H1 (cell line): ENCODE measurements at regions of chr9 and their contacts with region 1.

Region 1: GRCh38 chr9:121322037-121322775 is 47.8 kb downstream of the STOM start:
- DNase-seq: no peak
- H3K4me3 ChIP-seq: no peak overlapping the region
- H3K27ac ChIP-seq: no peak overlapping the region
- H3K4me1 ChIP-seq: no peaks in the 10 kb centered on the region
- H3K27me3 ChIP-seq: no peaks in the 10 kb centered on the region
- CTCF ChIP-seq: no peak
- EP300 ChIP-seq: no peak
- POLR2A ChIP-seq: no peak
- RAD21 ChIP-seq: no peak

Region 2: GRCh38 chr9:121222524-121223171 is 99.6 kb before region 1 on chr9:
- CTCF ChIA-PET with region 1: interaction called, 11 read pairs
- POLR2A ChIA-PET with region 1: no interaction called
- DNase-seq: no peak
- H3K4me3 ChIP-seq: no peak overlapping the region
- H3K27ac ChIP-seq: no peak overlapping the region
- H3K4me1 ChIP-seq: peaks cover 12 to 24% (median 19%) of the 10 kb centered on the region in 4 experiments
- H3K27me3 ChIP-seq: peaks cover 0 to 2% (median 0%) of the 10 kb centered on the region in 4 experiments; a peak in 2 of 7 replicates
- CTCF ChIP-seq: peak in 1 of 3 experiments; percentile 58; a peak in 1 of 4 replicates
- EP300 ChIP-seq: no peak
- POLR2A ChIP-seq: no peak
- RAD21 ChIP-seq: peak; percentile 30 to 34; a peak in 3 of 4 replicates

Region 3: GRCh38 chr9:121286973-121287741 is 35.0 kb before region 1 on chr9:
- CTCF ChIA-PET with region 1: interaction called, 18 read pairs
- POLR2A ChIA-PET with region 1: no interaction called
- DNase-seq: peak; percentile 77 to 88
- H3K4me3 ChIP-seq: peak overlapping the region in 1 of 4 experiments; percentile 45; a peak in 4 of 8 replicates
- H3K27ac ChIP-seq: no peak overlapping the region
- H3K4me1 ChIP-seq: peaks cover 24 to 36% (median 28%) of the 10 kb centered on the region in 4 experiments
- H3K27me3 ChIP-seq: peaks cover 9 to 54% (median 47%) of the 10 kb centered on the region in 4 experiments
- CTCF ChIP-seq: peak; percentile 13 to 42 (median 28)
- EP300 ChIP-seq: peak in 1 of 2 experiments; percentile 66; a peak in 1 of 3 replicates
- POLR2A ChIP-seq: no peak
- RAD21 ChIP-seq: peak; percentile 30 to 44; a peak in 3 of 4 replicates

Region 4: DNA sequence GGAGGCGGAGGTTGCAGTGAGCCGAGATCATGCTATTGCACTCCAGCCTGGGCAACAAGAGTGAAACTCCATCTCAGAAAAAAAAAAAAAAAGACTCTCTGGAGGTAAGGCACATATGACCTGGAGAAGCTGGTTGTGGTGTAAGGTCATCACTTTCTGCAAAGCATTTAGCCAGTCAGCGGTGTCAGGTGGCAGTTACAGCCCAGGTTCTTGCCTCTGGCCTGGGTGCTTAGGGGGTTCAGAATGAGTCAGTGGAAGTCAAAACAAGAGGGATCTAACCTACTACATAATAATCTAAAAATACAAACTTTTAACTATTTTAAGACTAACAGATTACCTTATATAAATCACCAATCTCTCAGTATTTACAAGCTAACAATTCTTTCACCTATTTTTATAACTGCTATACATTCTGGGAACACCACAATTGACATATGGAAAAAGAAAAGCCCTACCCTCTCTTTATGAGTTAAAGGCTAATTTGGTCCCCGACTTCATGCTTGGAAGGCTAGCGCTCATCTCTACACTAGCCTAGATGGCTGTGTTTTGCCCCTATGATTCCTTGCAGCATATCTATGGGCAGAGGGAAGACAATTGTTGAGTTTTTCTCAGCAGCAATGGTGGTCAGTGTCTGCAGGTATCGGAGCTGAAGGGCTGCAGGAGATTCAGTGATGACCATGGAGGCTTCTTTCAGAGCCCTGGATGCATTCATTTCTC is 18.6 kb after region 1 on chr9:
- CTCF ChIA-PET with region 1: interaction called, 59 read pairs
- POLR2A ChIA-PET with region 1: no interaction called
- DNase-seq: no peak
- H3K4me3 ChIP-seq: no peak overlapping the region
- H3K27ac ChIP-seq: no peak overlapping the region
- H3K4me1 ChIP-seq: no peaks in the 10 kb centered on the region
- H3K27me3 ChIP-seq: no peaks in the 10 kb centered on the region
- CTCF ChIP-seq: no peak
- EP300 ChIP-seq: no peak
- POLR2A ChIP-seq: no peak
- RAD21 ChIP-seq: no peak

Region 5: DNA sequence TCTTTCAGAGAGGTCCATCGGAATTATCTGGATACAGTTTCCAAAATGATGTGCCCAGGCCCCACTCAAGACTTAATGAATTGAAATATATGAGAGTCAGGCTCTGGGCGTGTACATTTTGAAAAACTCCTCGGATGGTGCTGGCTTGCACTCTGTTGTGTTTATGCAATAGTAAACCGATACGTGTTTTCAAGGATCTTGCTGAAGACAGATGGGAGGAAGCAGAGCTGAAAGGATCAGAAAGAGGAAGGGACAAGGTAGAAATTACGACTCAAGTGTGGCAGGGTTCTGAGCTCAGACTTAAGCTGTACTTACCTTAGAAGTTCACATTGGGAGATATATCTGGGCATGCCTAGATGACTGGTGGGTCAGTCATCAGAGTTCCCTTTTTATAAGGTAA is 61.5 kb after region 1 on chr9:
- CTCF ChIA-PET with region 1: interaction called, 30 read pairs
- POLR2A ChIA-PET with region 1: interaction called, 3 read pairs
- DNase-seq: no peak
- H3K4me3 ChIP-seq: no peak overlapping the region
- H3K27ac ChIP-seq: no peak overlapping the region
- H3K4me1 ChIP-seq: peaks cover 0 to 5% (median under 1%) of the 10 kb centered on the region in 4 experiments; a peak in 3 of 7 replicates
- H3K27me3 ChIP-seq: no peaks in the 10 kb centered on the region
- CTCF ChIP-seq: no peak
- EP300 ChIP-seq: no peak
- POLR2A ChIP-seq: no peak
- RAD21 ChIP-seq: no peak